Activated CD4-positive, alpha-beta T cell treated with anti-CD3 and anti-CD28 coated beads, Interleukin-2, amount 10 ng/mL, durations not matched to agents 7 days and 5 days (primary cell): ENCODE measurements at regions of chr19 and their contacts with region 1.

Region 1: DNA sequence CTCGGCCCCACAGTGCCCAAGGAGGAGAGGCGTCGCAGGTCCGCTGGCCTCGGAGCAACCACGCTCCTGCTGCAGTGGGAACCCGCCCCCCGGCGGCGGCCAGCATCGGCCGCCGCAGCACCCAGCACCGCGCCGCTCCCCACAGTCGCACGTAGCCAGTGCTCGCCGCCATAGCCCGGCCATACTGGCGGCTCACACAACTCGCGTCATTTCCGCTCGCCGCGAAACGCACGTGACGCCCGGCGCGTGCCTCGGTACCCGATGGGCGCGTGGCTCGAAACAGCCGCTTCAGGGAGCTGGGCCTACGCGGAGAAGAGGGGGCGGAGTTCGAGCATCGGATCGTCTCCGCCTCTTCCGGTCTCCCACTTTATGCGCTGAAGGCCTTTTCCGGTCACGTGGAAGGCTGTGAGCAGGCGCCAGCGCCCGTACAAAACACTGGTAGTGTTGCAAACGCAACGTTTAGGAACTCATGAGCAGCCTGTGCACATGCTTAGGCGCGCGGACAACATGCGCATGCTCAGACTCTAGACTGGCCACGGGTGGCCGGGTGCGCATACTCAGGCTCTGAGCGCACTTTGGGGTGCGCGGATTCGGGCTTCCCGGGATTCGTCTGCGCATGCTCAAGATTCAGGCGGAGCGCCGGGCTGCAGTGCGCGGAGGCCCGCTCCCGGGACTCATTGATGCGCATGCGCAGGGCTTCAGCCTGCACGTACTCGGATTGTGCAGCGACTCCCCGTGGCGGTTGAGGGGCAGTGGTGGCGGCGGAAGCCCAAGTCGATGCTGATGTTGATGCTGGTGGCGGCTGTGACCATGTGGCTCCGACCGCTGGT is at the starts of genes CATSPERD and LONP1:
- DNase-seq: peak; percentile 99
- H3K4me3 Mint-ChIP-seq: peak within 1 kb of the TSS; percentile 96
- H3K27ac Mint-ChIP-seq: peak within 1 kb of the TSS; percentile 97
- H3K4me1 Mint-ChIP-seq: peaks cover 33% of the 10 kb centered on the region
- H3K27me3 Mint-ChIP-seq: no peaks in the 10 kb centered on the region
- total RNA-seq, gene CATSPERD: not detected
- total RNA-seq, gene LONP1: 71.7 to 79.6 TPM

Region 2: GRCh38 chr19:5480427-5480836 is 239.7 kb before region 1 on chr19:
- CTCF ChIA-PET with region 1: no interaction called
- POLR2A ChIA-PET with region 1: no interaction called
- DNase-seq: peak; percentile 12
- H3K4me3 Mint-ChIP-seq: no peak overlapping the region
- H3K27ac Mint-ChIP-seq: no peak overlapping the region
- H3K4me1 Mint-ChIP-seq: no peaks in the 10 kb centered on the region
- H3K27me3 Mint-ChIP-seq: peaks cover 14% of the 10 kb centered on the region

Region 3: GRCh38 chr19:5707576-5708575 is 12.3 kb before region 1 on chr19:
- CTCF ChIA-PET with region 1: interaction called, 13 read pairs
- POLR2A ChIA-PET with region 1: no interaction called
- DNase-seq: no peak
- H3K4me3 Mint-ChIP-seq: no peak overlapping the region
- H3K27ac Mint-ChIP-seq: no peak overlapping the region
- H3K4me1 Mint-ChIP-seq: no peaks in the 10 kb centered on the region
- H3K27me3 Mint-ChIP-seq: no peaks in the 10 kb centered on the region